AG04449 (cell line): ENCODE measurements at regions of chr2 and their contacts with region 1.

Region 1: GRCh38 chr2:112749755-112750559 is 14.5 kb downstream of the CKAP2L start:
- DNase-seq: peak; percentile 21
- H3K4me3 ChIP-seq: no peak overlapping the region
- CTCF ChIP-seq: peak; percentile 99

Region 2: DNA sequence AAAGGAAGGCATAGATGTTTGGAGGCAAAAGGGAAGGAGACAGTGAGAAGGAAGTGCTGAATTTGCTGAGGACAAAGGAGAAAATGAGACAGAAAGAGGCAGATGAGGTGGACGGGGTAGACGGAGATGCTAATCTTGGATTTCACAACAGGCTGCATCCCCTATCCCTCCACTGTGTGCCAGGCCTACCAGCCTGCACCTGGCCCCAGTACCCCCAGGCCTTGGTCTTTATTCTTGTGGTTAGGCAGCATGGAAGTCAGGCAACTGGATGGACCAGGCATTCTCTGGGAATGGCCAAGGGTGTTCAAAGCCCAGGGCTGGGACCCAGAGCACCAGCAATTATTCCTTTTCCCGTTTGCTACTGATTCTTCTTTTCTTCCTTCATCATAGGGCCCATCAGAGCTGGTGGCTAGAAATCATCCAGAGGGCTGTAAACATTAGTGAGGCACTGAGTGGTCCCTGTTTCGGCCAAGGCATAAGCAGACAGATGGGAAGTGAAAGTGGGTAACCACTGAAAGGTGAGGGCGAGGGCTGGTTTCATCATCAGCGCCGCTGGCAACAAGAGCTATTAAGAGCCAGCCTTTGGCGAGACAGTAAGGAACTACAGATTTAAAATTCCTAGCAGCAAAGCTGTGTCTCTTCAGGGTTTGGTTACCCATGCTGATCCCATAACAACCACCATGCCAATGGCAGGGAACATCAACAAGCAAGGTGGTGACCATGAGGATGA is 113.6 kb before region 1 on chr2:
- CTCF ChIA-PET with region 1: no interaction called
- POLR2A ChIA-PET with region 1: no interaction called
- DNase-seq: no peak
- H3K4me3 ChIP-seq: no peak overlapping the region
- CTCF ChIP-seq: no peak

Region 3: DNA sequence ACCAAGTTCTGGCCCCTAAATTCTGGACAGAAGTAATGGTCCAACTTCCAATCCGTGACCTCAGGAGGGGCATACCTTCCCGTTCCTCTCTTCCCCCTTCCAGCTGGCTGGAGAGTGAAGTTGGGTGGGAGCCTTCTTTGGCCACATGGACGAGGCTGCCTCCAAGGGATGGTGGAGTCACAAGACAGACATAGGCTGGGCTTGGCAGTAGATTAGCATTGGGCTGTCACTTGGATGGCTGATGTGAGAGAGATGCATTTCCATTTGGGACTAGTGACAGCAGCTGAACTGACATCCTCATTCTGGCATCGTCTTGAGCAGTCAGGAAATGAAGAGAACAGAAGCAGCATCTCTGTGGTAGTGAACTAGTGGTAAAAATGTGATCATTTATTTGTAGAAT is 16.5 kb before region 1 on chr2:
- CTCF ChIA-PET with region 1: interaction called, 75 read pairs
- POLR2A ChIA-PET with region 1: no interaction called
- DNase-seq: no peak
- H3K4me3 ChIP-seq: no peak overlapping the region
- CTCF ChIP-seq: no peak

Region 4: DNA sequence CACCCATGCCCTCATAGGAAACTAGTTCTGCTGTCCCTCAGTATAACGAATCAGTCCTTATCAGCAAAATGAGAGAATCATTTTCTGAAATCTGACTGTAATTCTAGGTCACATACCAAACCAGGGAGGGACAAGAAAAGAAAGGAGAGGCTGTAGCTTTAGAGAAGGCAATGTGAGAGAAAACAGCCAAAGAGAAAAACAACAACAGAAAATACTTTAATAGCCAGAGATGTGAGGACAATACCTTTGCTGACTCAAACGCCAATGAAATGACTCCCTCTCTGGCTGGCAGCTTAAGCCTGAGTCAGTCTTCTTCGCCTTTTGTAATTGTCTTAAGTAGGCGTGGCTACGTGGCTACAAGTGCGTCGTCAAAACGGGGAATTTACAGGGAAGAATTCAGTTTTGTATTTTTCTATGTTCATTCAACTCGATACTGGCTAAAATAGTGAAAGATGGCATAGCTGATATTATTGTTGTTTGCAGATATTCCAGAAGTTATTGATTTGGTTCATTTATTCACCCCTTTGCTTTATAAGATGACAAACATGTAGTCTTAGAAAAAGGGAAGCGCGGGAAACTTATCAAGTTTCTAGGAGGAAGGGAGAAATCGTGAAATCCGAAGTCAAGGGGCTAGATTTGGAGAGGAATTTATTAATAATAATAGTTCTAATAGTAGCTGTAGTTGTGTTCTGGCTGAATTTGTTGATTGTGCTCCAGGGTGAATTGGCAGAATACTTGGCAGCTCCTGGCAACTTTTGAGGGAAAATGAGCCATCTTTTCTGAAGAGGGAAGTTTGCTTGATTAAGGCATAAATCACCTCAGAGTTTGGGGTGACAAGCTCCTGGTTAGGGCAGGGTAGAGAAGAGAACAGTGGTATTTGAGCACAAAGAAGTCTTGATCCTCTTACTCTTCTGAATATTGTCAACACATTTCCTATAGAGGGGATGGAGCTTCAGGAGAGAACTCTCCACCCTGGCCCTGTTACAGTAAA is 34.5 kb after region 1 on chr2 and contains the start of gene IL1A:
- CTCF ChIA-PET with region 1: interaction called, 10 read pairs
- POLR2A ChIA-PET with region 1: no interaction called
- DNase-seq: peak; percentile 14
- H3K4me3 ChIP-seq: no peak within 1 kb of the TSS
- CTCF ChIP-seq: no peak

Region 5: DNA sequence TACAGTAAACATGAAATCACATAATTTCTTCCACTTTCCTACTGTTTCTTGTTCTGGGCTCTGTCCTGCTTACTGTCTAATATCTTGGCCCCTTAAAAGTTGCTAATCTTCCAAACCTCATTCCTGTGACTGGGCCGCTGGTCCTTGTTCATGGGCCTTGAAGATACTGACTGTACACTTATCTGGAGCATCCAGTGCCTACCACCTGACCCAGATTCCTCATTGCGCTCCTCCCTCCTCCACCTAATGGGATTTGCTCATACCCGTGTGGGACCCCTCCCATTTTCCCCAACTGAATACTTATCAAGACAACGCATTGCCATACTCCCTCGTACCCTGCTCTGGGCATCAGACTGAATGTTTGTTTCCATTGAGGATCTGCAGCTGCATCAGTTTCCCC is 154.9 kb after region 1 on chr2:
- CTCF ChIA-PET with region 1: interaction called, 20 read pairs
- POLR2A ChIA-PET with region 1: no interaction called
- DNase-seq: no peak
- H3K4me3 ChIP-seq: no peak overlapping the region
- CTCF ChIP-seq: no peak

Region 6: DNA sequence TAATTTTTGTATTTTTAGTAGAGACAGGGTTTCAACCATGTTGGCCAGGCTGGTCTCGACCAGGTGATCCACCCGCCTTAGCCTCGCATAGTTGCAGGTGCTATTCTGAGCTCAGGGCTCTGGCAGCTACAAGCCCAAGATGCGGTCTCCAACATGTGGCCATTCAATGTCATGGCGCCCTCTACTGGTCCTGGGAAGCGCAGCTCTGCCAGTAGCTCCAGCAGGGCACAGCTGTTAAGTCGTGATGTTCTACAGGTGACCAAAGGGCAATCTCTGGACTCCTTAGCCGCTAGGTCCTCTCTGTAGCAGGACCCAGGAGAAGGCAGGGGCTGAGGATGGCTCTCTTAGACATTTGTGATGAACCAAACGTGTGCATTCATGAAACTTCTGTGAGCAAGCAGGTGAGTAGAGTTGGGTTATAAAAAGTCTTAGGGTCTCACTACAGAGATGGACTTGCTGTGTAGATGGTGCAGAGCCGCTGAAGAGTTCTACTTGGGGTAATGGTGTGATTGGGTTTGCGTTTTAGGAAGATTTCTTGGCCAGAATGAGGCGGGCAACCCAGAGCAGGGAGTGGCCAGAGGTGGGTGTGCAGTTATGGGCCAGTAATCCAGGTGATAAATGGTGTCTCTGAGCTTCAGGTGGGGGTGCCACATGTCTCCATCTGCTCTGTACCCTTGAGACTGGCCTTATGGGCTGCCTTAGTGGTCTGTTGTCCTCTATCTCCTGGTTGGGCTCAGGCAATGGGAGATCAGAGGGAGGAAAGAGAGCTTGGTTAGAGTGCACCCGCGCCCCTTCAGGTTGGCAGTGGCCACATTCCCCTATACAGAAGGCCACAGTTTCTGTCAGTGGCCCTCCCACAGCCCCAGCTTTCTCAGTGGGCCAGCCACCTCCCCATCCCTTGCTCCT is 192.0 kb after region 1 on chr2:
- CTCF ChIA-PET with region 1: interaction called, 688 read pairs
- POLR2A ChIA-PET with region 1: no interaction called
- DNase-seq: peak; percentile 14
- H3K4me3 ChIP-seq: no peak overlapping the region
- CTCF ChIP-seq: peak; percentile 95

Region 7: DNA sequence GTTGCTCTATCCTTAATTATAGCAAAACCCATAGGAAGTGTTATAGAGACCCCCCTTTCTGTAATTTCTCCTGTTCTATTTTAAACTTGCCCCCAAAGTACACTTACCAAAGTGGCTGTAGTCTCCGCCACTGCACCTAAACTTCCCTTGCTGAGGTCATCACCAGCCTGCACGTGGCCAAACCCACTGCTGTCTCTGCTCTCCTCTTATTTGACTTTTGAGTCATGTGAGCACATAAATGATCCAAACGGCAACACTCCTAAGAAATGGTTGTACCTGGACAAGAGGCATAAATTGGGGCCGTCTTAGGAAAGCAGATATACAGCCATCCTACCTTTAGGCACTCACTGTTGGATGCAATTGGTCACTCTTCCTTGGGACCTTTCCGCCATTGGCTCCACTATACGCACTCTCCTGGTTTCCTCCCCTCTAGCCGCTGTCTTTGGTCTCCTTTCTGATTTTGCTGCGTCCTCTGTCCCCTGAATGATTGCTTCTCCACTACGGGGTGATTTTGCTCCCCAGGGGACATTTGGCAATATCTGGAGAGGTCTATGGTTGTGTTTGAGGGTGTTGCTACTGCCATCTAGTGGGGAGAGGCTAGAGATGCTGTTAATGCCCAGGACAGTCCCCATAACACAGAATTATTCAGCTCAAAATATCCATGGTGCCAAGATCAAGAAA is 208.6 kb after region 1 on chr2:
- CTCF ChIA-PET with region 1: interaction called, 92 read pairs
- POLR2A ChIA-PET with region 1: no interaction called
- DNase-seq: no peak
- H3K4me3 ChIP-seq: no peak overlapping the region
- CTCF ChIP-seq: peak; percentile 81